HCT116 (cell line): ENCODE measurements at regions of chr11 and their contacts with region 1.

Region 1: GRCh38 chr11:66677599-66678375 is at the start of gene RBM4B:
- DNase-seq: peak; percentile 84
- ATAC-seq: peak; percentile 94
- H3K4me3 ChIP-seq: peak within 1 kb of the TSS; percentile 68 to 70
- H3K27ac ChIP-seq: peak within 1 kb of the TSS; percentile 82
- H3K4me1 ChIP-seq: peaks cover 3 to 24% of the 10 kb centered on the region in 2 experiments; a peak in 3 of 4 replicates
- H3K27me3 ChIP-seq: no peaks in the 10 kb centered on the region
- CTCF ChIP-seq: no peak
- POLR2A ChIP-seq: peak; percentile 66
- RAD21 ChIP-seq: no peak
- total RNA-seq, gene RBM4B: 18.1 TPM

Region 2: DNA sequence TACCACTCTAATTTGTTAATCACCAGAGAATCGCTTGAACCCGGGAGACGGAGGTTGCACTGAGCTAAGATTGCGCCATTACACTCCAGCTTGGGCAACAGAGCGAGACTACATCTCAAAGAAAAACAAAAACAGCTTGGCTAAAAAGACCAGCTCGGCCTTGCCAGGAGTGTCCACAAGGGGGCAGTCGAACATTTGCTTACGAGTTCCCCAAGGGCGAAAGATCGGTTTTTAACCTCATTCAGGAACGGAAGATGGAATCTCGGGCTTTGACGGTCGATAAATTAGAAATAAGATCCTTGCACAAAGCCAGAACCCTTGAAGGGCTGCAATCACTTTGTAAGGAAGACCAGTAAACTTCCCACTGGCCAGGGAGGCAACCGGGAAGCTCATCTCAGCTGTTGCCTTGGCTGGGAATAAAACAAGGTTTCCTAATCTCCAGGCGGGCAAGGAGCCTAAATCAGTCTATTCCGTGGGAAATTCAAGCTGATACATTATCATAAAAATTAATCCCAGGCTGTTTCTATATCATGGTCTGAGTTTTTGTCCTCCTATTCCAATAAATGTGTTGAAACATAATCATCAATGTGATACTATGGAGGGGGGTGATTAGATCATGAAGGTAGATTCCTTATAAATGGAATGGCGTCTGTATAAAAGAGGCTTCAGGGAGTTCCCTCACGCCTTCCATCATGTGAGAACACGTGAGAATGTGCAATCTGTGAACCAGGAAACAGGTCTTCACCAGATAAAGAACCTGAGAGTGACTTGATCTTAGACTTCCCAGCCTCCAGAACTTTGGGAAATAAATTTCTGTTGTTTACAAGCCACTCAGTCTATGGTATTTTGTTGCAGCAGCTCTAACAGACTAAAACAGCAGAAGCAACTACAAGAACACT is 291.4 kb before region 1 on chr11:
- CTCF ChIA-PET with region 1: interaction called, 29 read pairs
- POLR2A ChIA-PET with region 1: interaction called, 4 read pairs
- RAD21 ChIA-PET with region 1: interaction called in 1 of 2 experiments, 5 read pairs
- intact Hi-C with region 1: no loop called
- DNase-seq: peak; percentile 84
- ATAC-seq: peak; percentile 71
- H3K4me3 ChIP-seq: peak overlapping the region; percentile 27 to 32
- H3K27ac ChIP-seq: 0 out of 2 replicates have a peak overlapping the region, but pooled peaks have one; percentile 3
- H3K4me1 ChIP-seq: peaks cover 16 to 32% of the 10 kb centered on the region in 2 experiments; a peak in 3 of 4 replicates
- H3K27me3 ChIP-seq: no peaks in the 10 kb centered on the region
- CTCF ChIP-seq: peak; percentile 79 to 96 (median 94)
- POLR2A ChIP-seq: no peak
- RAD21 ChIP-seq: peak; percentile 71

Region 3: DNA sequence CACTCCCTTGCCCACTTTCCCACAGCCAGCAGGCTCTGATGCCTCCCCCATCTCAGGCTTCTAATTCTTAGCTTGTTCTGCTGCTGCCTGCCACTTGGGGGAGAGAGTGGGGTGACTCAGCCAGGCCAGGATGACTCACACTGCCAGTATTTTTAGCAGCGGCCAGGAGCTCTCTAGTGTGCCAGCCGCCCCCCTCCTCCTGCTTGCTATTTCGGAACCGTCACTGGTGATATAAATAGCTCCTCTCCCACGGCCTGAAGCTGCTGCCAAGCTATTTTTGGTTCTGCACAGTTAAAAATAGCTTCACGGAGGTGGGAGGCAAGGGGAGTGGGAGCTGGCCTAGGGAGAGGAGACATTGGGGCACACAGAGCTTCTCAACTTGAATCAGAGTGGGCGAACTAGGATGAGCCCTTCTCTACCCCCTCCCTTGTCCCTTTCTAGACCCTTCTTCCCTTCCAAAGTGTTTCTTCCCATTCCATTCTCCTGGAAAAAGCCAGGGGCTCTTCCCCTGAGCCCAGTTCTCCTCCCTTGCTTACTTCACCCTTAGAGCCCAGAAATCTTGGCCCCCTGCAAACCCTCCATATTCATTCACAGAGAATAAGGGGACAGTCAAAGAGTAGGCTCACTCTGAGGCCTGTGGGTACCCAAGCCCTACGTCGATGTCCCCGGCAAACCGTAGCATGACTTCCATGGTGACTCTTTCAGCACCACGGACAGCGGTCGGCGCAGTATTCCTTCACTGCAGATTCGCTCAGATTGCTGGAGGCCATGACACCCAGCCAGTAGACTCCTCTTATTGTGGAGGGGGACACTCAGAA is 259.4 kb before region 1 on chr11:
- CTCF ChIA-PET with region 1: interaction called, 15 read pairs
- POLR2A ChIA-PET with region 1: no interaction called
- RAD21 ChIA-PET with region 1: no interaction called
- intact Hi-C with region 1: no loop called
- DNase-seq: peak; percentile 48
- ATAC-seq: peak; percentile 96
- H3K4me3 ChIP-seq: no peak overlapping the region; a peak in 1 of 4 replicates
- H3K27ac ChIP-seq: no peak overlapping the region
- H3K4me1 ChIP-seq: peaks cover 12 to 17% of the 10 kb centered on the region in 2 experiments
- H3K27me3 ChIP-seq: peaks cover 42% of the 10 kb centered on the region
- CTCF ChIP-seq: peak; percentile 33 to 56 (median 53); a peak in 5 of 6 replicates
- POLR2A ChIP-seq: no peak
- RAD21 ChIP-seq: peak; percentile 42

Region 4: GRCh38 chr11:66480117-66480938 is 197.5 kb before region 1 on chr11 and contains the start of gene DPP3:
- CTCF ChIA-PET with region 1: interaction called, 15 read pairs
- POLR2A ChIA-PET with region 1: interaction called, 8 read pairs
- RAD21 ChIA-PET with region 1: interaction called in 1 of 2 experiments, 4 read pairs
- intact Hi-C with region 1: loop called (anchors 1 kb)
- DNase-seq: peak; percentile 91
- ATAC-seq: peak; percentile 90
- H3K4me3 ChIP-seq: peak within 1 kb of the TSS; percentile 86 to 88
- H3K27ac ChIP-seq: peak within 1 kb of the TSS; percentile 79
- H3K4me1 ChIP-seq: peaks cover 8 to 17% of the 10 kb centered on the region in 2 experiments; a peak in 1 of 4 replicates
- H3K27me3 ChIP-seq: no peaks in the 10 kb centered on the region
- CTCF ChIP-seq: no peak
- POLR2A ChIP-seq: peak; percentile 66
- RAD21 ChIP-seq: no peak
- total RNA-seq, gene DPP3: 55.6 TPM

Region 5: GRCh38 chr11:66579017-66579606 is 98.7 kb before region 1 on chr11:
- CTCF ChIA-PET with region 1: interaction called, 12 read pairs
- POLR2A ChIA-PET with region 1: interaction called, 5 read pairs
- RAD21 ChIA-PET with region 1: no interaction called
- intact Hi-C with region 1: loop called (anchors 1 kb)
- DNase-seq: peak; percentile 31
- ATAC-seq: peak; percentile 97
- H3K4me3 ChIP-seq: no peak overlapping the region
- H3K27ac ChIP-seq: no peak overlapping the region
- H3K4me1 ChIP-seq: 0 out of 4 replicates have a peak, but pooled peaks cover 0 to 3% of the 10 kb centered on the region in 2 experiments
- H3K27me3 ChIP-seq: no peaks in the 10 kb centered on the region
- CTCF ChIP-seq: peak; percentile 54 to 85 (median 80); a peak in 5 of 6 replicates
- POLR2A ChIP-seq: no peak
- RAD21 ChIP-seq: peak; percentile 75

Region 6: GRCh38 chr11:66638177-66639065 is 39.4 kb before region 1 on chr11 and contains the start of gene RBM4:
- CTCF ChIA-PET with region 1: interaction called, 5 read pairs
- POLR2A ChIA-PET with region 1: interaction called, 11 read pairs
- RAD21 ChIA-PET with region 1: no interaction called
- intact Hi-C with region 1: no loop called
- DNase-seq: peak; percentile 100
- ATAC-seq: peak; percentile 95
- H3K4me3 ChIP-seq: peak within 1 kb of the TSS; percentile 82 to 89
- H3K27ac ChIP-seq: peak within 1 kb of the TSS; percentile 72
- H3K4me1 ChIP-seq: peaks cover 4 to 29% of the 10 kb centered on the region in 2 experiments
- H3K27me3 ChIP-seq: no peaks in the 10 kb centered on the region
- CTCF ChIP-seq: no peak
- POLR2A ChIP-seq: peak; percentile 68
- RAD21 ChIP-seq: no peak
- total RNA-seq, gene RBM4: 94.4 TPM

Region 7: GRCh38 chr11:66818231-66818955 is 140.6 kb after region 1 on chr11:
- CTCF ChIA-PET with region 1: no interaction called
- POLR2A ChIA-PET with region 1: no interaction called
- RAD21 ChIA-PET with region 1: no interaction called
- intact Hi-C with region 1: no loop called
- DNase-seq: no peak
- ATAC-seq: no peak; the same call in 1 of the 2 replicates
- H3K4me3 ChIP-seq: no peak overlapping the region
- H3K27ac ChIP-seq: no peak overlapping the region
- H3K4me1 ChIP-seq: peaks cover 0 to 7% of the 10 kb centered on the region in 2 experiments; a peak in 2 of 4 replicates
- H3K27me3 ChIP-seq: no peaks in the 10 kb centered on the region
- CTCF ChIP-seq: no peak
- POLR2A ChIP-seq: no peak
- RAD21 ChIP-seq: no peak

Region 8: DNA sequence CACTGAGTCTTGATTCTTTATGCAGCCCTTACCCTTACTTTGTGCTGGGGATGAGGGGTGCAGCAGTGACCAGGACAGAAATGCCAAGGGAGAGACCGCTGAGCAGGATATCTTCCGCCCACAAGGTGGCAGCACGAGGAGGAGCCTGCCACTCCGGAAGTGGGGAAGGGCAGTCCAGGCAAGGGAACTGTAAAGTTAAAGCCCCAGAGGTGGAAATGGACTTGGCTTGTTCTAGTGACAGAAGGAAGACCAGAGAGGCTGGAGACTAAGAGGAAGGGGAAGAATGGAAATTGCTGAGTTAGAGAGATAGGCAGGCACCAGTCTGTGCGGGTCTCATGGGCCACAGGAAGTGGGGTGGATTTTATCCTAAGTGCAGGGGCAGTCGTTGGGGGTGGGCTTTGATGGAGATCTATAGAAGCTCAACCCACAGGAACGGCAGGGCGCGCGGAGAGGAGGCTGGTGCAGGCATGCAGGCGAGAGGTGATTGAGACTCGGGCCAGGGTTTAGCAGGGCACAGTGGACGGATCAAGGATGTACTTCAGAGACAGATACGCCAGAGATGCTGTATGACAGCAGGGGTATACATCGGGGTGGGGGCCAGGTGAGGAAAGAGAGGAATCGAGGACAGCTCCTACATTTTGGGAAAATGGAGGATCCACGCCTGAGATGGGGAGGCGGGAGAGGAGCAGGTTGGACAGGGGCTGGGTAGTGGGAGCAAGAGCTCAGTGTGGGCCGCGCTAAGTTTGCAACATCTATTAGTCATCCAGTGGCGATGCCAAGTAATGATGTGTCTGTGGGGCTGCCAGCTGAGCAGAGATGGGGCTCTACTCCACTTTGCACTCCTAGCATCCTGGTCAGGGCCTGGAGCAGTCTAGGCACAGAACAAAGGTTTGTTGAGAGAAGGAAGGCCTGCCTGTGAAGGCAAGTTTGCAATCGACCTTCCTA is 585.2 kb after region 1 on chr11:
- CTCF ChIA-PET with region 1: no interaction called
- POLR2A ChIA-PET with region 1: no interaction called
- RAD21 ChIA-PET with region 1: no interaction called
- intact Hi-C with region 1: no loop called
- DNase-seq: peak; percentile 39
- ATAC-seq: peak; percentile 76
- H3K4me3 ChIP-seq: no peak overlapping the region
- H3K27ac ChIP-seq: peak overlapping the region; percentile 45
- H3K4me1 ChIP-seq: peaks cover 14 to 45% of the 10 kb centered on the region in 2 experiments; a peak in 3 of 4 replicates
- H3K27me3 ChIP-seq: no peaks in the 10 kb centered on the region
- CTCF ChIP-seq: peak; percentile 83 to 94 (median 90)
- POLR2A ChIP-seq: no peak
- RAD21 ChIP-seq: peak; percentile 74